WTC11 (cell line): ENCODE measurements at regions of chr11 and their contacts with region 1.

Region 1: GRCh38 chr11:46489661-46490560 is 98.3 kb upstream of the CHRM4 start:
- DNase-seq: peak; percentile 43
- ATAC-seq: peak; percentile 90
- H3K4me3 Mint-ChIP-seq: no peak overlapping the region
- H3K27ac Mint-ChIP-seq: no peak overlapping the region; the same call in 1 of the 2 replicates
- H3K4me1 Mint-ChIP-seq: peaks cover 7% of the 10 kb centered on the region
- H3K27me3 Mint-ChIP-seq: no peaks in the 10 kb centered on the region
- CTCF ChIP-seq: peak; percentile 41; the same call in 1 of the 2 replicates

Region 2: GRCh38 chr11:46410021-46410420 is 79.9 kb before region 1 on chr11:
- CTCF ChIA-PET with region 1: interaction called, 20 read pairs
- POLR2A ChIA-PET with region 1: no interaction called
- DNase-seq: peak; percentile 68
- ATAC-seq: peak; percentile 95
- H3K4me3 Mint-ChIP-seq: no peak overlapping the region
- H3K27ac Mint-ChIP-seq: no peak overlapping the region
- H3K4me1 Mint-ChIP-seq: no peaks in the 10 kb centered on the region
- H3K27me3 Mint-ChIP-seq: no peaks in the 10 kb centered on the region
- CTCF ChIP-seq: no peak

Region 3: DNA sequence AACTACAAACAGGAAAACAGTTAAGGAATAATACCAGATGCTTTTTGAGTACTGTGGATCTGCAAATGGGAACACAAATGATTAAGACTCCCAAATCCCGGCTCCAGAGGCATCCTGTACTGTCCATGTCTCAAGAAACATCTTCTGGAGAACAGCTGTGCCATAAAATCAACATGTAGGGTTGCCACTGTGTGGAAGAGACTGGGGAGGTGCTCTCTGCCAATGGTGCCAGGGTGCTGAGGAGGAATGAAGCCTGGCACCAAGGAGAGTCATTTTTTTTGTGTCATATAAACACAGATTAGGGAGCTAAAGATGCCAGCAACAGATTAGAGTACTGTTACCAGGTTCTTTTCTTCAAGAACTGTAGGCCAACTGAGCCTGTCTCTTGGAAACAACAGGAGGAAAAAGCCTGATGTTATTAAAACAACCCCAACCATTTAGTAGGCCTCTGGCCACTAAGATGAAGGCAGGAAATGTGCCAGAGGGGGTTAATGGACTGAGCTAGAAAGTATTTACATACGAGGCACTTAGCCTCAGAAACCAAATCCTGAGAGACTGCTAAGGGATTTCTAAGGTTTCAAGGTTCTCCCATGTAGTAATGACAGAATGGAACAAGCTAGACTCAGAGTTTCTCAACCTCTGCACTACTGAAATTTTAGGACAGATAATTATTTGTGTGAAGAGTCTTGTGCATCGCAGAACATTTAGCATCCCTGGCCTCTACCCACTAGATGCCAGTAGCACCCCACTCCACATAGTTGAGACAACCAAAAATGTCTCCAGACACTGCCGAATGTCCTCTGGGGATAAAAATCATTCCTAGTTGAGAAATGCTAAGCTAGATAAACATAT is 43.8 kb before region 1 on chr11:
- CTCF ChIA-PET with region 1: interaction called, 17 read pairs
- POLR2A ChIA-PET with region 1: no interaction called
- DNase-seq: no peak
- ATAC-seq: peak; percentile 92
- H3K4me3 Mint-ChIP-seq: no peak overlapping the region
- H3K27ac Mint-ChIP-seq: no peak overlapping the region
- H3K4me1 Mint-ChIP-seq: peaks cover 24% of the 10 kb centered on the region
- H3K27me3 Mint-ChIP-seq: peaks cover 11% of the 10 kb centered on the region
- CTCF ChIP-seq: no peak

Region 4: DNA sequence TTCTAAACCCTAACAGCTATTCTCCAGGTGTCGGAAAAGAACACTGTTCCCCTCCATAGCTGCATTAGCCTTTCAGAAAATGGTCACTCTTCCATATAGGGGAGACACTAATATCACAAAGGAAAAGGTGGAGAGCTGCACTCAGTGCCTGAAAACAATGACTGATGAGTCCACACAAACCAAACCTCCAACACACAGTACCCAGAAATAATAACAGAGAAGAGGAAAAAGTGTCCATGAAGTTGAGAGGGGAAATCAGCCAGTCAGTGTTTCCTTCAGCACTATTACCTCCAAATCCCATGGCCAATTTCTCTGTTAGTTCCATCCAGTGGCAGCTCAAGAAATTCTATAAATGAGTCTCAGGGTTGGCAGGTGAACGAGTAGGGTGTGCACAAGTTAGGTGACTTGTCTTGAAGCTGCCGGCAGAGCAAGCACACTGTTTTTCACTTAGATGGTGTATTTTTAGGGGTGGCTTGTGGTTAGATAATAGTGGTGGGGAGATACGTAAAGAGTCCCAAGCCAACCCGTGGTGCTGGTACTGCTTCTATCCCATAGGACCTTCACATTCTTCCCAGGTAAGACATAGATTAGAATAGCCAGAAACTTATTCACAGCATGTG is 13.9 kb before region 1 on chr11:
- CTCF ChIA-PET with region 1: interaction called, 42 read pairs
- POLR2A ChIA-PET with region 1: no interaction called
- DNase-seq: no peak
- ATAC-seq: no peak
- H3K4me3 Mint-ChIP-seq: no peak overlapping the region
- H3K27ac Mint-ChIP-seq: no peak overlapping the region; the same call in 1 of the 2 replicates
- H3K4me1 Mint-ChIP-seq: no peaks in the 10 kb centered on the region
- H3K27me3 Mint-ChIP-seq: no peaks in the 10 kb centered on the region
- CTCF ChIP-seq: no peak

Region 5: GRCh38 chr11:46513934-46514342 is 24.0 kb after region 1 on chr11:
- CTCF ChIA-PET with region 1: interaction called, 24 read pairs
- POLR2A ChIA-PET with region 1: interaction called, 4 read pairs
- DNase-seq: no peak
- ATAC-seq: peak; percentile 77
- H3K4me3 Mint-ChIP-seq: no peak overlapping the region
- H3K27ac Mint-ChIP-seq: peak overlapping the region; percentile 88
- H3K4me1 Mint-ChIP-seq: peaks cover 31% of the 10 kb centered on the region
- H3K27me3 Mint-ChIP-seq: no peaks in the 10 kb centered on the region
- CTCF ChIP-seq: no peak

Region 6: GRCh38 chr11:46529095-46529905 is 39.4 kb after region 1 on chr11:
- CTCF ChIA-PET with region 1: interaction called, 72 read pairs
- POLR2A ChIA-PET with region 1: no interaction called
- DNase-seq: peak; percentile 88
- ATAC-seq: peak; percentile 99
- H3K4me3 Mint-ChIP-seq: no peak overlapping the region
- H3K27ac Mint-ChIP-seq: no peak overlapping the region; the same call in 1 of the 2 replicates
- H3K4me1 Mint-ChIP-seq: peaks cover 16% of the 10 kb centered on the region
- H3K27me3 Mint-ChIP-seq: no peaks in the 10 kb centered on the region
- CTCF ChIP-seq: peak; percentile 94

Region 7: DNA sequence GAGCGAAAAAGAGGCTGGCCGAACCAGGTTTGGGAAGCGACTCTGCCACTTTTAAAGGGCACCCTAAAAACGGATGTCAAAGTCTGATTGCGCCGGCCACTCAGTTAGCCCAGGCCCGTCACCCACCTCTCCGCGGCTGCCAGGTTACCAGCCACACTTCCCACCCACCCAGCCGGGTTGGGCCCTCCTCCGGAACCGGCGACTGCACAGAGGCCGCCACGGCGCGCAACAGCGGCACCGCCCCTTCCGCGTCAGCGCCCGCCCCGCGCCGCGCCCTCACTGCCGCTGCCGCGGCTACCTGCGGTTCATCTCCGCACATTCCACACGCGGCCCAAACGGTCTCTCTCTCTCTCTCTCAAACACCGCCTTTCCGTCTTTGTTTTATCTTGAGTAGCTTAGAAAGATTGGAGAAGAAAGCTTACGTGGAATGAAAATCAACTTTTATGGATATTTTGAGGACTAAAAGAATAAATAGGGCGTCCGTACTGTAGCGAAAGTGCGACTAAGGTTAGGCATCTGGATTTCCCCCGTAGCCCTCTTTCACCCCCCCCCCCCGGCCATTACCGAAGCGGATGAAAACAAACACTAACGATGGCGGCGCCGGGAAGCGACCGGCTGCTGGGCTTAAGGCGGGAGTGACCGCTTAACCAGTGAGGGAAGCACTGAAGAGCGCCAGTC is 127.2 kb after region 1 on chr11 and contains the starts of genes ATG13 and HARBI1:
- CTCF ChIA-PET with region 1: interaction called, 10 read pairs
- POLR2A ChIA-PET with region 1: no interaction called
- DNase-seq: peak; percentile 89
- ATAC-seq: peak; percentile 95
- H3K4me3 Mint-ChIP-seq: peak within 1 kb of the TSS; percentile 93
- H3K27ac Mint-ChIP-seq: peak within 1 kb of the TSS; percentile 100
- H3K4me1 Mint-ChIP-seq: peaks cover 23% of the 10 kb centered on the region
- H3K27me3 Mint-ChIP-seq: no peaks in the 10 kb centered on the region
- CTCF ChIP-seq: no peak
- total RNA-seq, gene ATG13: 73.4 to 85.4 TPM (median 81.7 TPM) in 3 replicates
- total RNA-seq, gene HARBI1: 4.4 to 5.6 TPM (median 5.2 TPM) in 3 replicates